ENCODE measurements at regions of chr1 and their contacts with region 1.

Region 1: DNA sequence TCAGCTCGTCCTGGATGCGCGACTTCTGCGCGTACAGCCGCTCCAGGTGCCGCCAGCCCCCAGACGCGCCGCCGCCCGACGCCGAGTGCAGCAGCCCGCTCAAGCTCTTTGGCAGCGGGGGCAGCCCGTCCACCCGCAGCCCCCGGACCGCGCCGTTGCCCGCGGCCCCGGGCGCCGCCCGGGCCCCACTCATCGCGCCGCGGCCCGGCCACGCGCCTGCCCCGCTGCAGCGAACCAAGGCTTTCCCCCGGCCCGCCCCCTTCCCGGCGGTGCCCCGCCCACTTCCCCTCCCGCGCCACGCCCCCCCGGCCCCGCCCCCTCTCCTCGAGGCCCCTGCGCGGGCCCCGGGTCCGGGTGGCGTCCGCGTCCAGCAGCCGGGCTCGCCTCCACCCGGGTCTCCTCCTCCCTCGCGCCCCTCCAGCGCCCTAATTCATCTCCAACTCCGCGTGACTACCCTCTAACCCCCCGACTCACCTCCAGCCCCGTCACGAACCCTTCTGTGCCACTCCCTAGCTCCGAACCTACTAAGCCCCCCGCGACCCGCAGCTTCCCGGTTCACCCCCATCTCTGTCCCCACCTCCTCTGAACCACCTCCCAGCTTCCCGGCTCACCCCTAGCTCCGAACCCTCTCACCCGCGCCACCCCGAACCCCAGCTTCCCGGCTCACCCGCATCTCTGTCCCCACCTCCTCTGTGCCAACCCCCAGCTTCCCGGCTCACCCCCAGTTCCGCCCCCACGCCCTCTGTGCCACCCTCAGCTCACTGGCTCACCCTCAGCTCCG is at the start of gene FAM89A:
- DNase-seq: peak; percentile 55 to 86 (median 70)
- ATAC-seq: peak; percentile 72
- H3K4me3 ChIP-seq: peak within 1 kb of the TSS; percentile 78
- H3K4me3 Mint-ChIP-seq: peak within 1 kb of the TSS; percentile 91
- H3K27ac ChIP-seq: peak within 1 kb of the TSS in 1 of 2 donors; percentile 3
- H3K27ac Mint-ChIP-seq: peak within 1 kb of the TSS; percentile 58
- H3K4me1 ChIP-seq: peaks cover 24% of the 10 kb centered on the region
- H3K4me1 Mint-ChIP-seq: peaks cover 40% of the 10 kb centered on the region
- H3K27me3 ChIP-seq: no peaks in the 10 kb centered on the region
- H3K27me3 Mint-ChIP-seq: no peaks in the 10 kb centered on the region
- CTCF ChIP-seq: no peak
- total RNA-seq, gene FAM89A: 3.3 to 4.0 TPM

Region 2: GRCh38 chr1:230867903-230868735 is 172.1 kb before region 1 on chr1 and contains the start of gene C1orf198:
- CTCF ChIA-PET with region 1: no interaction called
- POLR2A ChIA-PET with region 1: no interaction called
- intact Hi-C with region 1: loop called in 1 of 2 experiments (anchors 2 kb)
- DNase-seq: peak; percentile 57 to 86 (median 72)
- ATAC-seq: peak; percentile 92
- H3K4me3 ChIP-seq: peak within 1 kb of the TSS; percentile 64
- H3K4me3 Mint-ChIP-seq: peak within 1 kb of the TSS; percentile 93
- H3K27ac ChIP-seq: no peak within 1 kb of the TSS
- H3K27ac Mint-ChIP-seq: no peak within 1 kb of the TSS
- H3K4me1 ChIP-seq: peaks cover 20% of the 10 kb centered on the region
- H3K4me1 Mint-ChIP-seq: peaks cover 19% of the 10 kb centered on the region
- H3K27me3 ChIP-seq: peaks cover 17 to 21% of the 10 kb centered on the region in 2 experiments
- H3K27me3 Mint-ChIP-seq: peaks cover 20% of the 10 kb centered on the region
- CTCF ChIP-seq: no peak
- total RNA-seq, gene C1orf198: 2.2 TPM

Region 3: GRCh38 chr1:230917284-230918135 is 122.7 kb before region 1 on chr1:
- CTCF ChIA-PET with region 1: no interaction called
- POLR2A ChIA-PET with region 1: no interaction called
- intact Hi-C with region 1: loop called in 1 of 2 experiments (anchors 5 kb)
- DNase-seq: peak; percentile 51 to 90 (median 70)
- ATAC-seq: peak; percentile 73
- H3K4me3 ChIP-seq: no peak overlapping the region
- H3K4me3 Mint-ChIP-seq: no peak overlapping the region
- H3K27ac ChIP-seq: no peak overlapping the region
- H3K27ac Mint-ChIP-seq: peak overlapping the region; percentile 44
- H3K4me1 ChIP-seq: no peaks in the 10 kb centered on the region
- H3K4me1 Mint-ChIP-seq: no peaks in the 10 kb centered on the region
- H3K27me3 ChIP-seq: no peaks in the 10 kb centered on the region
- H3K27me3 Mint-ChIP-seq: no peaks in the 10 kb centered on the region
- CTCF ChIP-seq: peak; percentile 87

Region 4: DNA sequence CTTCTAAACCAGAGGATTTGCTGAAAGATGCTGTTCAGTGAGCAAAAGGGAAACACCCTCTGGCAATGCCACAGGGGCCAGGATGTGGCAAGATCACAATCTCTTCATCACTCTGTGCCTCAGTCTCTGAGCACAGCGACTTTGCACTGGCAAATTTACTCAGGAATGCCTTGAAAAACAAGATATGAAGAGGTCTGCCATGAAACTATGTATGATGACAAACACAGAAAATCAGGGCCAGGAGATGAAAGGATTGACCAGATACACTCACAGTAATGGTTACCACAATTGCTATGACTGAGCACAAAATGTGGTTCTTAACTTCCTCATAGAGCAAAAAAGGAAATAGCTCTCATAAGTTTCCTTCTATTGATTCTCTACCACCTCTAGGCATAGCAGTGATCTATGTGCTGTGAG is 67.3 kb before region 1 on chr1:
- CTCF ChIA-PET with region 1: interaction called, 3 read pairs
- POLR2A ChIA-PET with region 1: interaction called, 28 read pairs
- intact Hi-C with region 1: loop called in 1 of 2 experiments (anchors 2 kb)
- DNase-seq: peak in 13 of 14 experiments; percentile 40 to 88 (median 55)
- ATAC-seq: peak; percentile 86
- H3K4me3 ChIP-seq: peak overlapping the region; percentile 2
- H3K4me3 Mint-ChIP-seq: peak overlapping the region; percentile 52
- H3K27ac ChIP-seq: peak overlapping the region; percentile 50 to 52
- H3K27ac Mint-ChIP-seq: peak overlapping the region; percentile 77
- H3K4me1 ChIP-seq: peaks cover 59% of the 10 kb centered on the region
- H3K4me1 Mint-ChIP-seq: peaks cover 78% of the 10 kb centered on the region
- H3K27me3 ChIP-seq: no peaks in the 10 kb centered on the region
- H3K27me3 Mint-ChIP-seq: no peaks in the 10 kb centered on the region
- CTCF ChIP-seq: no peak

Region 5: DNA sequence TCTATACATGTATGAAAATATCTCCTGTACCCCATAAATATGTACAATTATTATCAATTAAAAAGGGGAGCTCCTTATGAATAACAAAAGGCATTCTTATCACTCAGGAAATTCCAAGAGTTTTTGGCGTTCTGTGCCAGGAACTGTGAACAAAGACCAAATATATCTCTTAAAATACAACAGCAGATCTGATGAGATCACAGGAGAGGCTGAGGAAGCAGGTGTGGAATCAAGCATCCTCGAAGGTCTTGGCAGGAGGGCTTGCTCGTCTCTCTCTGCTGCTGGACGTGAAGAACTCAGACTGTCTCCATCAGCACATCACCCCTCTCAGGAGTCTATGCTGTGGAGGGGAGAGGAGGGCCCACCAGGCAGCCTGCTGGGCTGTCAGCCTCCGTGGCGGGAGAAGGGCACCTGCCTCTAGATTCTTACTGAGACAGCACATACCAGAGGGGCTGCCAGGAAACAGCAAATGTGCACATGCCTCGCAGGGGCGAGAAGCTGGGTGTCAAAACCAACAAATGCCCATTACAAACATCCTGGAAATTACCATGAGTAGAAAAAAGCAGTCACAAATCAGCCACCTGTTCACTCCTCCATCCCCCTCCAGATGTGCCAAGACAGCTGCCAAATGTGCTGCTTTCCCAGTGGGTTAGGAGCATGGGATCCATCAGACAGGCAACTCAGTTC is 30.7 kb after region 1 on chr1:
- CTCF ChIA-PET with region 1: no interaction called
- POLR2A ChIA-PET with region 1: no interaction called
- intact Hi-C with region 1: no loop called
- DNase-seq: no peak
- ATAC-seq: no peak
- H3K4me3 ChIP-seq: no peak overlapping the region
- H3K4me3 Mint-ChIP-seq: no peak overlapping the region
- H3K27ac ChIP-seq: no peak overlapping the region
- H3K27ac Mint-ChIP-seq: no peak overlapping the region
- H3K4me1 ChIP-seq: no peaks in the 10 kb centered on the region
- H3K4me1 Mint-ChIP-seq: no peaks in the 10 kb centered on the region
- H3K27me3 ChIP-seq: no peaks in the 10 kb centered on the region
- H3K27me3 Mint-ChIP-seq: peaks cover 2% of the 10 kb centered on the region
- CTCF ChIP-seq: no peak